ENCODE measurements at regions of chr3 and their contacts with region 1.

Region 1: DNA sequence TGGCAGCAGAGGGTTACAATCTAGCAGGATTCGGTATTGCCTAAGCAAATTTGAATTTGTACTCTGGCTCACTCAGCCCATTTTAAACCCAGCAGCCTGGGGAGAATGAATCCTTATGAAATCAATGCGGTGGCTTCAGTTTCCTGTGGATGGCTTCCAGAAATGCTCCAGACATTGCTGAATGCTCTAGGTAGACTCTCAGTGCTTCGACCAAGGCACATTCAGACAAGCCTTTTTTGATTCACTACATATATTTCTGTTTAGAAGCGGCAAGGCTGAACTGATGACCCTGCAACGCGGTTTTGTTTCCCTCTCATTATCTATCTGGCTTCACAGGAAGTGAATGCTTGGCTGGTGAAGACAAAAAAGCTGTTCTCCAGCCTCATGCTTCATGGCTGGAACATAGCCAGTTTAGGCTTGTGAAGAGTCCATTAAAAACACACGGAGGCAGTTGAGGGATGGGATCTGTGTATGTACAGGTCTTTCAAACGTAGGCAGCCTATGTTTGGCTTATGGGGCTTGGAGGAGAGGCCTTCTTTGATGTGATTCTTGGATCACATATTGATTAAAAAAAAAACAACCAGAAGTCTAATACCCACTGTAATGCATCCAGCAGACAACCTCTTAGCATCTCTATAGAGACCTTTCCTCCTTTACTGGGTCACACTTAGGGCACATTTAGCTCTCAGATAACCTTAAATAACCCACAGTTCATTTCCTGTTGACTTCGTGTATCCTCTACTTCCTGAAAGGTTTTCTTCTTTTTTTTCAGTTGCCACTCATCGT is 400.2 kb upstream of the TBL1XR1 start:
- DNase-seq: peak; percentile 94
- H3K4me3 Mint-ChIP-seq: no peak overlapping the region
- H3K27ac Mint-ChIP-seq: peak overlapping the region; percentile 93
- H3K4me1 Mint-ChIP-seq: peaks cover 61% of the 10 kb centered on the region
- H3K27me3 Mint-ChIP-seq: no peaks in the 10 kb centered on the region
- CTCF ChIP-seq: no peak

Region 2: GRCh38 chr3:177448987-177449975 is 148.2 kb before region 1 on chr3:
- CTCF ChIA-PET with region 1: interaction called, 7 read pairs
- POLR2A ChIA-PET with region 1: interaction called, 10 read pairs
- intact Hi-C with region 1: no loop called
- DNase-seq: peak; percentile 95
- H3K4me3 Mint-ChIP-seq: peak overlapping the region; percentile 43
- H3K27ac Mint-ChIP-seq: peak overlapping the region; percentile 63
- H3K4me1 Mint-ChIP-seq: peaks cover 21% of the 10 kb centered on the region
- H3K27me3 Mint-ChIP-seq: no peaks in the 10 kb centered on the region
- CTCF ChIP-seq: no peak

Region 3: DNA sequence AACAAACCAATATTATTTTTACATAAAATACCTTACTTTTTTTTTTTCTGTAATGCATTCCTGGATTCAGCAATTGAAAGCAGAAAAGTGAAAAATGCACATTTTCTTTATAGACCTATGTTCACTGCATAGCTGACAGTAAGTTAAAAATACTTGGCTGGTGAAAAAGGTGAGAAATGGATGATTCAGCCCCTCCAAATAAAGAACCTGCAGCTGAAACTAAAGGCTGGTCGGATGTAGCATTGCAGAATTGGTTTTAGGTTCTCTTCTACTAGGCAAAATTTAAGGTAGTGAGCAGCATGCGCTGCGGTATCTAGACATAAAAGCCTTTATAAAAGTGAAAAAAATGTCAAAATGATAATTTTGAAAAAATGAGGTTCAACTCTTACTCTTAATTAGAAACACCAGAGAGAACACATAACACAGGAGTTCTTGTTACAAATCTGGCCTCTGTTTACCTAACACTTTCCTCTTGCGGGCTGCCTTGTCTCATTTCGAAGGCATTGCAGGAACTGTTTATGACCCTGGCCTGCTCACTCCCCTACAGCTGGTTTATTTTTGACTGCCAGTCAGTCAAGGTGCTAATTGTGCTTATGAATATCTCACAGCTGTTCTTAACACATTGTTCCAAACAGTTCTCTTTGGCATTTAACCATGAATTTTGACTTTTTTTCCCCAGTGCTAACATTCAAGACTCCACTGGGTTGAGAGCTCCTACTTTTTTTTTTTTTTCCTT is 55.2 kb after region 1 on chr3:
- CTCF ChIA-PET with region 1: no interaction called
- POLR2A ChIA-PET with region 1: no interaction called
- intact Hi-C with region 1: no loop called
- DNase-seq: no peak
- H3K4me3 Mint-ChIP-seq: no peak overlapping the region
- H3K27ac Mint-ChIP-seq: no peak overlapping the region
- H3K4me1 Mint-ChIP-seq: peaks cover 15% of the 10 kb centered on the region
- H3K27me3 Mint-ChIP-seq: no peaks in the 10 kb centered on the region
- CTCF ChIP-seq: no peak

Region 4: DNA sequence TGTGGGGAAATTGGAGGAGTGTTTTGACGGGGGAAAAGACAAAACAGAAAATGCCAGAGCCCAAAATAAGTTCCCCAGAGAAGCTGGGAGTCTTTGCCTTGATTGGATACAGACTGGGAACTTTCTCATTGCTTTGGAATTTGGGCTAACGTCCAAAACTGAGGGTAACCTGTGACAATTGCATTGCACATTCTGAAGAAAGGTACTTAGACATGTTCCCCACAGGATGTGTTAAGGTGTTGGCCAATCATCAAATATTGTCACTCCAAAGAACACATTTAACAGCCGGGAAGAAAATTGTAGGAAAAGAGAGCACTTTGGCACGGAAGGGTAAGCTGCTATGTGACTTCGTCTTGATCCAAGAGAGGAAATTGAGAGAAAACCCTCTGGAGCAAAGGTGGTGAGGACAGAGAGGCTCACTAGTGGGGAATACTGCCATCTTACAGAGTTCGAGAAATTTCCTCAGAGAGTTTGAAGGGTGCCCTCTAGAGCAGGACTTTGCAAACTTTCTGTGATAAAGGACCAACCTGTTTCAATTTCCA is 219.2 kb after region 1 on chr3:
- CTCF ChIA-PET with region 1: no interaction called
- POLR2A ChIA-PET with region 1: interaction called, 6 read pairs
- intact Hi-C with region 1: loop called (anchors 10 kb)
- DNase-seq: peak; percentile 98
- H3K4me3 Mint-ChIP-seq: peak overlapping the region; percentile 48
- H3K27ac Mint-ChIP-seq: peak overlapping the region; percentile 89
- H3K4me1 Mint-ChIP-seq: peaks cover 40% of the 10 kb centered on the region
- H3K27me3 Mint-ChIP-seq: no peaks in the 10 kb centered on the region
- CTCF ChIP-seq: peak; percentile 34